Adrenal gland (tissue), 19 donors: ENCODE measurements at regions of chr4 and their contacts with region 1.

Region 1: DNA sequence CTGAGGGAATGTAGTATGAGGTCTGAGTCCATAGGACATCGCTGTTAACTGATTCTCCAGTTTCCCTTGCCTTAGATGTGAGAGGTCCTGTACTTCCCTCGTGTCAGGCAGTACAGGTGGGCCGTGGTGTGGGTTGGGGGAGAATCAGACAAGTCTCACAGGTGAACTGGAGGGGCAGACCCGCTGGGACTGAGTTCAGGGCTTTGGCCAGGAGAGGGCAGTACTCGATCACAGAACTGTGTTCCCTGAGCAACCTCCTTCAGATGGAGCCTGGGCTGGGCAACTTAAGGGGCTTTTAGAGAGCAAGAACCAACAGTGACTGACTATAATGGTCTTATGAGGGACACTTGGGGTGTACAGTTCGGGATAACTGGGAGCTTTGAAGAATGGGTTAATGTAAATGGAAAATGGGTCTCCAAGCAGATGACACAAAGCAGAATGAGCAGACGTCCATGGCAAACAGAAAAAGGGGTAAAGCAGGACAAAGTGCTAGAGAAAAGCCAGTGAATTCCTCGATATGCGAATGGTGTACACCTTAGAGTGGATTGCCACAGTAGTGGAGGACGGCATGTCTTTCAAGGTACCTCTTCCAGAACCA is 83.6 kb downstream of the CCNG2 start:
- DNase-seq: peak; percentile 33 to 66 (median 57)
- H3K4me3 ChIP-seq: no peak overlapping the region
- H3K27ac ChIP-seq: no peak overlapping the region
- H3K4me1 ChIP-seq: no peaks in the 10 kb centered on the region
- H3K27me3 ChIP-seq: no peaks in the 10 kb centered on the region
- CTCF ChIP-seq: peak; percentile 26 to 71 (median 60)
- POLR2A ChIP-seq: no peak

Region 2: DNA sequence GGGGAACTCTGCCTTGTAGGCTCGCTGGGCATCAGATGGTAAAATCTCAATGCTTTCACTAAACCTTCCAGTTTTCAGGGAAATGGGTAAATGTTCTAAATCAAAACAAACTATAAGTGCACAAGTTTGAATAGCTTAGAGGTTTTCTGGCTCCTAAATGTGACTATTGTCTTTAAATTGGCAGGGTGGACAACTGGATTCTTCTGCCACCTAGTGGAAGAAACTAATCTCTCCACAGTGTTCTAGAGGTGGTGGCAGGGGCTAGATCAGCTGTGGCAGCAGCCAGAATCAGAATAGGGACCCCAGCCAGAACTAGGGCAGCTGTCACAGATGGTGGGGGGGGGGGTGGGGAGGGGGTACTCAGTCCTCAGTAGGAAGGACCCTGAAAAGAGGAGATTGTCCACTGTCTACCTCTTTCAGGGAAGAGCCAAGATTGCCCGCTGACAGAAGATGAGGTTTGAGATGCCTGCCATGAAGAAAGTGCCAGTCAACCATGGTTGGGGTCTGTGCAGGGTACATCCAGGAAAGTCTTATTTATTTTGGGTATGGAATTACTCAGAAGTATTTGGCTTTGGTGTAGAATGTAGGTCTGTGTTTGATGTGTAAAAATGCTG is 117.9 kb after region 1 on chr4:
- intact Hi-C with region 1: loop called (anchors 5 kb)
- DNase-seq: peak in 3 of 7 donors; percentile 16 to 19 (median 17)
- H3K4me3 ChIP-seq: no peak overlapping the region
- H3K27ac ChIP-seq: no peak overlapping the region
- H3K4me1 ChIP-seq: no peaks in the 10 kb centered on the region
- H3K27me3 ChIP-seq: no peaks in the 10 kb centered on the region
- CTCF ChIP-seq: peak; percentile 27 to 56 (median 38)
- POLR2A ChIP-seq: no peak

Region 3: GRCh38 chr4:77600521-77601451 is 360.2 kb after region 1 on chr4:
- intact Hi-C with region 1: loop called in 1 of 2 experiments (anchors 10 kb)
- DNase-seq: peak in 6 of 7 donors; percentile 21 to 56 (median 32)
- H3K4me3 ChIP-seq: no peak overlapping the region
- H3K27ac ChIP-seq: no peak overlapping the region
- H3K4me1 ChIP-seq: no peaks in the 10 kb centered on the region
- H3K27me3 ChIP-seq: peaks cover 4% of the 10 kb centered on the region
- CTCF ChIP-seq: peak; percentile 62 to 82 (median 64)
- POLR2A ChIP-seq: no peak